Esophagus muscularis mucosa (tissue), 4 donors: ENCODE measurements at regions of chr18 and their contacts with region 1.

Region 1: GRCh38 chr18:50356036-50356945 is 18.6 kb upstream of the SKA1 start:
- DNase-seq: no peak
- H3K4me3 ChIP-seq: no peak overlapping the region
- H3K27ac ChIP-seq: no peak overlapping the region
- H3K4me1 ChIP-seq: no peaks in the 10 kb centered on the region
- H3K27me3 ChIP-seq: peaks cover 0 to 23% (median 0%) of the 10 kb centered on the region in 4 donors
- CTCF ChIP-seq: no peak
- EP300 ChIP-seq: no peak
- POLR2A ChIP-seq: no peak

Region 2: DNA sequence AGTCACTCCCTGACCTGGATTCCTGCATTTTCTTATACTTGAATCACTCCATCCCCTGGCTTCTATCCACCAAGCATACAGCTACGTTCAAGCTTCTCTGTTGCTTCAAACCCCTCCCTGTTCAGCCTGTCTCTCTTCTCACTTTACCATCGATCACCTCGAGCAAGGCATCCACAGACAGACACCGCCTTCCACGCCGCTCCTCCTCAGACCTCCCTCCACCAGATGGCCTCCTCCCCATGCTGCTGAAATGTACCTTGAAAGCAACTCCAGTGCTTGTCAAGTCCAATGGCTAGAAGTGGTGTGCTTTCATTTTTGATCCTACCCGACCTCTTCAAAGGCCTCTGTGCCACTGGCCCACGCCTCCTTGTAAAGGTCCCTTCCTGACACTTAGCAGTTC is 411.6 kb before region 1 on chr18:
- intact Hi-C with region 1: loop called (anchors 10 kb)
- DNase-seq: no peak
- H3K4me3 ChIP-seq: no peak overlapping the region
- H3K27ac ChIP-seq: no peak overlapping the region
- H3K4me1 ChIP-seq: no peaks in the 10 kb centered on the region
- H3K27me3 ChIP-seq: no peaks in the 10 kb centered on the region
- CTCF ChIP-seq: peak; percentile 52 to 61 (median 55)
- EP300 ChIP-seq: no peak
- POLR2A ChIP-seq: no peak

Region 3: GRCh38 chr18:50203801-50204604 is 152.3 kb before region 1 on chr18:
- intact Hi-C with region 1: loop called (anchors 10 kb)
- DNase-seq: no peak
- H3K4me3 ChIP-seq: no peak overlapping the region
- H3K27ac ChIP-seq: no peak overlapping the region
- H3K4me1 ChIP-seq: peaks cover 0 to 32% (median 22%) of the 10 kb centered on the region in 4 donors
- H3K27me3 ChIP-seq: peaks cover 0 to 13% (median 1%) of the 10 kb centered on the region in 4 donors
- CTCF ChIP-seq: peak; percentile 57 to 70 (median 59)
- EP300 ChIP-seq: no peak
- POLR2A ChIP-seq: no peak

Region 4: DNA sequence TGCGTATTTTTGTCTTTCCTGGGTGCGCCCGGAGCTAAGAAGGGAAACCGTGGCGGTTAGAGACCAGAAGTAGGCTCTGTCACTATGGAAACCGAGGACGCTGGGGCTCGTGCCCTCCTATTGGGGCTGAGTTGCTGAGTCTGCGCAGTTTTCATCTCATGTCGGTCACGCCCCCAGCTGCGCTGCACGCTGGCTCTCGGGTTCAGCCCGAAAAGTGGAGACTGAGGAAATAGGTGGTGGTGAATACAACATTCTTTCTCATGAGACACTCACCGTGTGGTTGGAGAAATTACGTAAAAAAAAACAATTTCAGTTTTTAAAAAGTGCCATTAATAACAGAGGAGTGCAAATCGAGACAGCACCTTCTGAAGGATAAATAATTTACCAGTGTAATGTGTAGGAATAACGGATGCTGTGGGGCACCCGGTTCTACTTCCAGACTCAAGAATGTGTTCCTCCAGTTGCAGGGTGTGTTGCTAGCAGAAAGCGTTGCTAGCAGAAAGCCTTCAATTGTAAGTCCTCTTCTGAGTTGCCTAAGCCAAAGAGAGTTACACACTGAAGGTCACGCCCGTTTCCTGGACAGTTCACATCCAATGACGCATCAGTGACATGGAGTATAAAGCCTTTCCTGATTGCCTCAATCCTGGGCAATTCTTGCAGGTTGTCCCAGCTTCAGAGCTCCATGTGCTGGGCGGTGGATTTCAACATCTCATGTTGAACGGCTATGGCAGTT is 48.4 kb before region 1 on chr18:
- intact Hi-C with region 1: loop called (anchors 10 kb)
- DNase-seq: no peak
- H3K4me3 ChIP-seq: peak overlapping the region; percentile 51 to 61 (median 53)
- H3K27ac ChIP-seq: peak overlapping the region in 1 of 4 donors; percentile 43
- H3K4me1 ChIP-seq: peaks cover 5 to 16% (median 14%) of the 10 kb centered on the region in 4 donors
- H3K27me3 ChIP-seq: peaks cover 0 to 17% (median 0%) of the 10 kb centered on the region in 4 donors
- CTCF ChIP-seq: no peak
- EP300 ChIP-seq: no peak
- POLR2A ChIP-seq: no peak

Region 5: GRCh38 chr18:50422286-50422898 is 66.1 kb after region 1 on chr18:
- intact Hi-C with region 1: no loop called
- DNase-seq: peak; percentile 42
- H3K4me3 ChIP-seq: no peak overlapping the region
- H3K27ac ChIP-seq: no peak overlapping the region
- H3K4me1 ChIP-seq: no peaks in the 10 kb centered on the region
- H3K27me3 ChIP-seq: peaks cover 0 to 8% (median 0%) of the 10 kb centered on the region in 4 donors
- CTCF ChIP-seq: no peak
- EP300 ChIP-seq: no peak
- POLR2A ChIP-seq: no peak